ENCODE measurements at regions of chr13 and their contacts with region 1.

Region 1: DNA sequence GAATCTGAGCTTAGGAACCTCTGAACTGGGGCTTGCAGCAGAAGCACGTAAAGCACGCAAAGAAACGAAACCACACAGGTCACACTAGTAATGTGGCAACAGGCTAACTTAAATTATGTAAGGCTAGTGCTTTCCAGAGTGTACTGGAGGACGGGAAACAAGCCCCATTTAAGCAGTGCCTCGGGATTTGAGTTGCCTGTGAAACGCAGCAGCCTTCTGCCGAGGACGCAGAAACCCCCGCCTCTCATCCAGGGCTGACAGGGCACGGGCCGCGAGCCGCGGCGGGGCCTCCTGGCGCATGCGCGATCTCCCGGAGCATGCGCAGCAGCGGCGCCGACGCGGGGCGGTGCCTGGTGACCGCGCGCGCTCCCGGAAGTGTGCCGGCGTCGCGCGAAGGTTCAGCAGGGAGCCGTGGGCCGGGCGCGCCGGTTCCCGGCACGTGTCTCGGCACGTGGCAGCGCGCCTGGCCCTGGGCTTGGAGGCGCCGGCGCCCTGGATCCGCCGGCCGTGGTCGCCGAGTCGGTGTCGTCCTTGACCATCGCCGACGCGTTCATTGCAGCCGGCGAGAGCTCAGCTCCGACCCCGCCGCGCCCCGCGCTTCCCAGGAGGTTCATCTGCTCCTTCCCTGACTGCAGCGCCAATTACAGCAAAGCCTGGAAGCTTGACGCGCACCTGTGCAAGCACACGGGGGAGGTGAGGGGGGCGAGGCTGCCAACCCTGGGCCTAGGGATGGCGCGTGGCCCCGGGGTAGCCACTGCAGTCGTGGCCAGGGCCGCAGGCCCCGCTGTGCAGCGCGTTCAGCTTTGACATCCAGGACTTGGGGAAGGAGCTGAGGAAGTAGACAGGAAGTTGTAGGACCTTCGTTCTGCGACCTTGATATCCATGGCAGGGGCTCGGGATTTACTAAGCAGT is at the start of gene GTF3A:
- DNase-seq: peak; percentile 91
- H3K4me3 ChIP-seq: peak within 1 kb of the TSS; percentile 23 to 66 (median 57)
- H3K27ac ChIP-seq: peak within 1 kb of the TSS; percentile 69
- H3K4me1 ChIP-seq: peaks cover 25% of the 10 kb centered on the region
- H3K27me3 ChIP-seq: no peaks in the 10 kb centered on the region
- CTCF ChIP-seq: no peak
- POLR2A ChIP-seq: peak; percentile 89
- total RNA-seq, gene GTF3A: 71.2 and 73.3 TPM in 2 replicates

Region 2: GRCh38 chr13:27374650-27375049 is 49.9 kb before region 1 on chr13:
- CTCF ChIA-PET with region 1: interaction called, 3 read pairs
- POLR2A ChIA-PET with region 1: no interaction called
- dilution Hi-C with region 1: no loop called
- intact Hi-C with region 1: loop called (anchors 1 kb)
- DNase-seq: peak; percentile 73
- H3K4me3 ChIP-seq: no peak overlapping the region
- H3K27ac ChIP-seq: no peak overlapping the region
- H3K4me1 ChIP-seq: no peaks in the 10 kb centered on the region
- H3K27me3 ChIP-seq: peaks cover 6 to 10% of the 10 kb centered on the region in 2 experiments
- CTCF ChIP-seq: peak; percentile 67 to 75
- POLR2A ChIP-seq: no peak

Region 3: DNA sequence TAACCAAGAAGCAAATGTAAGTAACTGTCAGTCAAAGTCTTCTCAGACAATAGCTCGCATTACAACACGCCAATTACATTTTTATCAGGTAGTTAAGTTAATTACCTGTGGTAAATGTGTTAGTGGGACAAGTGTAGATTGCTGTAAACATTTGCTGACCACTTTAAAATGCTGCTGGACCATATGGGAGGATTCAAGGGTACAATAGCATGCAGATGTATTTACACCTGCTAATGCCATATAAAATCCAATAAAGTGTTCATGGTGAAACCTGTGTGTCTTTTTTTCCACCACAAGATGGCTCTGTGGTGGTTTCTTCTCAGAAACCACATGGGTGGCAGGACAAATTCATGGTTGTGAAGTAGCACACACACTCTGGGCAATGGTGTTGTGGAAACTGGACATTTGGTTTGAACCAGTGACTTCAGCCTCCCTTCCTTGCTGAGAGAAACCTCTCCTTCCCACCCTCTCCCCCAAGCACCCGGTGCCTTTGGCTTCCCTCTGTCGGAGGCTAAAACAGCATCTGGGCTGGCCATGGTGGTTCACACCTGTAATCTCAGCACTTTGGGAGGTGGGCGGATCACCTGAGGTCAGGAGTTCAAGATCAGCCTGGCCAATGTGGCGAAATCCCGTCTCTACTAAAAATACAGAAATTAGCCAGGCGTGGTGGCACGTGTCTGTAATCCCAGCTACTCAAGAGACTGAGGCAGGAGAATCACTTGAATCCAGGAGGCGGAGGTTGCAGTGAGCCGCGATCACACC is 18.1 kb before region 1 on chr13:
- CTCF ChIA-PET with region 1: interaction called, 18 read pairs
- POLR2A ChIA-PET with region 1: no interaction called
- dilution Hi-C with region 1: no loop called
- intact Hi-C with region 1: no loop called
- DNase-seq: peak; percentile 47
- H3K4me3 ChIP-seq: no peak overlapping the region
- H3K27ac ChIP-seq: no peak overlapping the region
- H3K4me1 ChIP-seq: no peaks in the 10 kb centered on the region
- H3K27me3 ChIP-seq: peaks cover 13 to 17% of the 10 kb centered on the region in 2 experiments
- CTCF ChIP-seq: peak; percentile 31 to 42
- POLR2A ChIP-seq: no peak

Region 4: GRCh38 chr13:27437126-27437525 is 12.6 kb after region 1 on chr13:
- CTCF ChIA-PET with region 1: interaction called, 15 read pairs
- POLR2A ChIA-PET with region 1: no interaction called
- dilution Hi-C with region 1: no loop called
- intact Hi-C with region 1: no loop called
- DNase-seq: no peak
- H3K4me3 ChIP-seq: no peak overlapping the region
- H3K27ac ChIP-seq: no peak overlapping the region
- H3K4me1 ChIP-seq: no peaks in the 10 kb centered on the region
- H3K27me3 ChIP-seq: no peaks in the 10 kb centered on the region
- CTCF ChIP-seq: no peak
- POLR2A ChIP-seq: no peak

Region 5: GRCh38 chr13:27449936-27450828 is 25.7 kb after region 1 on chr13 and contains the start of gene MTIF3:
- CTCF ChIA-PET with region 1: interaction called, 41 read pairs
- POLR2A ChIA-PET with region 1: interaction called, 8 read pairs
- dilution Hi-C with region 1: no loop called
- intact Hi-C with region 1: loop called (anchors 1 kb)
- DNase-seq: peak; percentile 92
- H3K4me3 ChIP-seq: peak within 1 kb of the TSS; percentile 68 to 90 (median 82)
- H3K27ac ChIP-seq: peak within 1 kb of the TSS; percentile 55
- H3K4me1 ChIP-seq: peaks cover 21% of the 10 kb centered on the region
- H3K27me3 ChIP-seq: peaks cover 7 to 20% of the 10 kb centered on the region in 2 experiments
- CTCF ChIP-seq: no peak
- POLR2A ChIP-seq: peak; percentile 77
- total RNA-seq, gene MTIF3: 23.5 and 36.1 TPM in 2 replicates